Head of caudate nucleus (tissue), 42 donors: ENCODE measurements at regions of chr2 and their contacts with region 1.

Region 1: DNA sequence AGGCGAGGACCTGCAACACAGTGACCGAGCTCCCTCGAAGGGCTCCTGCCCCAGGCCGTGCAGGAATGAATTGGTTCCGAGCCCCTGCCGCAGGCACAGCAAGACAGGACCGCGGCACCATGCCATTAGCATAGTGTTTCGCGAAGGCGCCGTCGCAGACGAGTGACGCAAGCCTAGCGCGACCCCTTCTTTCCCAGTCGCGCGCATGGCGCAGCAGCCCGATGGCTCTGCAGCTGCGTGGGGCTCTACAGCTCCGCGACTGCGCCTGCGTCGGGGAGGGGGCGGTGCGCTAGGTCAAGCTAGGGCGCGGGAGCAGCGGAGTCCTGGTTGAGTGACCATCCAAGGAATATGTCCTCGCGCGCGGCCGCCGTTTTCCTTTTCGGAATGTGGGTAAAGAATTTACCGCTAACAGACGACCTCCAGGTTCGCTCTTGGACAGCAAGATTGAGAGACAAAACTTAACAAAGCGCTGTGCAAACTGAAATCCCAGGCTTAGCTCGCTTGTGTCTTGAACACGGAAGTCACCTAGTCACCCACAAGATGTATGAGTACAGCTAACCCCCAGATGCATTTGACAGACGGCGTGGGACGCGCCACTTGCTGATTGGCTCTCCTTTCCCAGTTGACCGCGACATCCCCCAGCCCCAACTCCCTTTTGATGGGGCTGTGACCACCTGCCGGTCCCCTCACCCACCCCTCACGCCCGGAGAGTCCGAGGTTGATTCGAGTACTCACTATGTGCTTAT is at the start of gene TRMT61B:
- DNase-seq: peak; percentile 92 to 99 (median 96)

Region 2: GRCh38 chr2:28764909-28765711 is 105.2 kb before region 1 on chr2:
- intact Hi-C with region 1: no loop called
- DNase-seq: peak in 16 of 42 donors; percentile 10 to 69 (median 32)

Region 3: DNA sequence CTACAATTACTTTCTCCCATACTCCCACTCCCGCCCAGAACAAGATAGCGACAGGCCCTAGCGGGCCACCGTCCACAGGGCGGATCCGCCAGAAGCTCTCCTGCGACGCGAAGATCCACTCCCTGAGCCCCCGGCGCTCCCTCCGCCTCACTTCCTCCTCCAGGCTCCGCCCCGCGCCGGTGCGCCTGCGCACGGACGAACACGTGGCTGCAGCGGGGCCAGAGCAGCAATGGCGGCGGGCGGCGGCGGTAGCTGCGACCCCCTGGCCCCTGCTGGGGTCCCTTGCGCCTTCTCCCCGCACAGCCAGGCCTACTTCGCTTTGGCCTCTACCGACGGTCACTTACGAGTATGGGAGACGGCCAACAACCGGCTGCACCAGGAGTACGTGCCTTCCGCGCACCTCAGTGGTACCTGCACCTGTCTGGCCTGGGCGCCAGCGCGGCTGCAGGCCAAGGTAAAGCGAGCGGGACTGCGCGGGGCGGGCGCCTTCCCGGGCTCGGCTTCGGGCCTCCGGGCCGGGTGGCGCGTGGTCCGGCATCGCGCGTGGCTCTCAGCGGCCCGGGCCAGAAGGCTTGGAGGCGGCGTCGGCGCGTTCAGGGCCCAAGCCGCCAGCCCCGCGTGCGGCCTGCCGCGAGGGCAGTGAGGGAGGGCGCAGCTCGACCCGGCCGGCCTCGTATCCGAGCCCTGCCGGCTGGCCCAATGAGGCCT is 24.3 kb after region 1 on chr2 and contains the start of gene WDR43:
- intact Hi-C with region 1: loop called (anchors 2 kb)
- DNase-seq: peak; percentile 90 to 99 (median 98)